Mammary epithelial cell (primary cell): ENCODE measurements at regions of chr18 and their contacts with region 1.

Region 1: DNA sequence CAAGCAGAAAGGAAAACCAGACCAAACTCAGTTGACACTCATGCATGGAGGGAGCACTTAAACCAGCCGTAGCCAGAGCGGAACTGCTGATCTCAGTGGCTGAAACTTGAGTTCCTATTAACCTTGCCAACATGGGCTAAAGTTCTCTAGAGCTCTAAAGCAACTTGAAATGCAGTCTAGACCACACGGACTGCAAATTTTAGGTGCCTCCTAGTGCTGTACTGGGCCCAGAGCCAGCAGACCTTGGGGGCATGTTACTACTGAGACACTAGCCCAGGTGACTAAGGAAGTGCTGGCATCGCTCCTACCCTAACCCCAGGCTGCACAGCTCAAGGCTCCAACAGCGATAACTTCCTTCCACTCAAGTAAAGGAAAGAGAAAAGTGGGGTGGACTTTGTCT is 236.5 kb downstream of the AKAIN1 start:
- DNase-seq: no peak
- H3K4me3 ChIP-seq: no peak overlapping the region
- H3K27ac ChIP-seq: no peak overlapping the region
- H3K4me1 ChIP-seq: no peaks in the 10 kb centered on the region
- H3K27me3 ChIP-seq: no peaks in the 10 kb centered on the region
- CTCF ChIP-seq: no peak

Region 2: GRCh38 chr18:4854671-4855070 is 105.9 kb before region 1 on chr18:
- CTCF ChIA-PET with region 1: no interaction called
- dilution Hi-C with region 1: no loop called
- in situ Hi-C with region 1: loop called in 1 of 2 experiments (anchors 25 kb)
- intact Hi-C with region 1: no loop called
- DNase-seq: no peak
- H3K4me3 ChIP-seq: no peak overlapping the region
- H3K27ac ChIP-seq: no peak overlapping the region
- H3K4me1 ChIP-seq: no peaks in the 10 kb centered on the region
- H3K27me3 ChIP-seq: peaks cover 2% of the 10 kb centered on the region
- CTCF ChIP-seq: no peak

Region 3: DNA sequence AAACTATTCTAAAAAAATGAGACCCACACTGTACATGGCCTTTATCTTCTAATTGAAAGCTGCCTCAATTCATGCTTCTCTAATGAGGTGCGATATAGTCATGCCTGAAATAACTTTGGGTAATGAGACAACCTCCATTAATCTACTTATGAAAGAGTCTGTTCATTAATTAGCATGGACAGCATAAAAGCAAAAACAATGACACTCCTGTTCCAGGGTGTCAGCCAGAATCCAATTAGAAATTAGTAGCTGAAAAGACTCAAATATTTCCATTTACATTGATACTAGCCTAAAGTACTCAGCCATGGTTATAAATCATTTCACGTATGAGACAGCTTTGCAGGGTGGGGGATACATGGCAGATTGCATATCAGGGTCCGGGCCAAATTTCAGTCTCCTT is 52.2 kb before region 1 on chr18:
- CTCF ChIA-PET with region 1: no interaction called
- dilution Hi-C with region 1: loop called (anchors 5 kb)
- in situ Hi-C with region 1: no loop called
- intact Hi-C with region 1: no loop called
- DNase-seq: no peak
- H3K4me3 ChIP-seq: no peak overlapping the region
- H3K27ac ChIP-seq: no peak overlapping the region
- H3K4me1 ChIP-seq: no peaks in the 10 kb centered on the region
- H3K27me3 ChIP-seq: no peaks in the 10 kb centered on the region
- CTCF ChIP-seq: no peak